Activated CD4-positive, alpha-beta memory T cell treated with anti-CD3 and anti-CD28 coated beads for 36 hours (primary cell): ENCODE measurements at regions of chr4 and their contacts with region 1.

Region 1: GRCh38 chr4:102826890-102827673 is at the start of gene UBE2D3:
- DNase-seq: peak; percentile 97
- H3K4me3 Mint-ChIP-seq: no peak within 1 kb of the TSS
- H3K27ac Mint-ChIP-seq: no peak within 1 kb of the TSS
- H3K4me1 Mint-ChIP-seq: peaks cover 26% of the 10 kb centered on the region
- H3K27me3 Mint-ChIP-seq: no peaks in the 10 kb centered on the region
- total RNA-seq, gene UBE2D3: 415 to 447 TPM

Region 2: GRCh38 chr4:102430461-102430910 is 396.6 kb before region 1 on chr4:
- CTCF ChIA-PET with region 1: interaction called, 8 read pairs
- POLR2A ChIA-PET with region 1: no interaction called
- intact Hi-C with region 1: loop called (anchors 5 kb)
- DNase-seq: no peak
- H3K4me3 Mint-ChIP-seq: peak overlapping the region; percentile 82
- H3K27ac Mint-ChIP-seq: peak overlapping the region; percentile 62
- H3K4me1 Mint-ChIP-seq: peaks cover 8% of the 10 kb centered on the region
- H3K27me3 Mint-ChIP-seq: no peaks in the 10 kb centered on the region

Region 3: DNA sequence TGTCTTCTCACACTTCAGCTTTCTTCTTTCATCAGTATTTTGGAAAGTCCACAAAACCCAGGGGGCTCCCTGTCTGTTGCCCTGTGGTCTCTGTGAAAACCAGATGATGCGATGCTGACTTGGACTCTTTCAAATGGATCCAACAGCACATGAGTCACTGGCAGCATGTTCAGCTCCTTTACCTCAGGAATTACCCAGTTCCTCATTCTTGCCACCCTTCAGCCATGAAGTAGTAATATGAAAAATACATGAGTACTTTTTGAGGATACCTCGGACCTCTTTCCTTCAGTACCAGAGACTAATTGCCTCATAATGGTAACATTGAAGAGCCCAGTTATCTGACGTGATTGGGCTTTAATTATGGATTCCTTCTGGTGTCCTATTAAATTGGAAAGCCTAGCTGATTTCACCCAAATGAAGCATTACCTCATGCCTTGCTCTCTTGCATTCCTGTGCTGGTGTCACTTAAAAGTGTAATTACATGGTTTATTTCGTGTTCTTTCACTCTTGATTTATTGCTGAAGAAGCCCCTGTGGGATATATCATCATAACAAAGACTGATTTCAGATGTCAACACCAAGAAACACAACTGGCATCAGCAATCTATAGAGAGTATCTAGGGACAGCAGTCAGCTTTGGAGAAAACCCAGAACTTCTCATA is 262.6 kb before region 1 on chr4:
- CTCF ChIA-PET with region 1: no interaction called
- POLR2A ChIA-PET with region 1: no interaction called
- intact Hi-C with region 1: no loop called
- DNase-seq: peak; percentile 51
- H3K4me3 Mint-ChIP-seq: no peak overlapping the region
- H3K27ac Mint-ChIP-seq: peak overlapping the region; percentile 40
- H3K4me1 Mint-ChIP-seq: peaks cover 82% of the 10 kb centered on the region
- H3K27me3 Mint-ChIP-seq: no peaks in the 10 kb centered on the region

Region 4: DNA sequence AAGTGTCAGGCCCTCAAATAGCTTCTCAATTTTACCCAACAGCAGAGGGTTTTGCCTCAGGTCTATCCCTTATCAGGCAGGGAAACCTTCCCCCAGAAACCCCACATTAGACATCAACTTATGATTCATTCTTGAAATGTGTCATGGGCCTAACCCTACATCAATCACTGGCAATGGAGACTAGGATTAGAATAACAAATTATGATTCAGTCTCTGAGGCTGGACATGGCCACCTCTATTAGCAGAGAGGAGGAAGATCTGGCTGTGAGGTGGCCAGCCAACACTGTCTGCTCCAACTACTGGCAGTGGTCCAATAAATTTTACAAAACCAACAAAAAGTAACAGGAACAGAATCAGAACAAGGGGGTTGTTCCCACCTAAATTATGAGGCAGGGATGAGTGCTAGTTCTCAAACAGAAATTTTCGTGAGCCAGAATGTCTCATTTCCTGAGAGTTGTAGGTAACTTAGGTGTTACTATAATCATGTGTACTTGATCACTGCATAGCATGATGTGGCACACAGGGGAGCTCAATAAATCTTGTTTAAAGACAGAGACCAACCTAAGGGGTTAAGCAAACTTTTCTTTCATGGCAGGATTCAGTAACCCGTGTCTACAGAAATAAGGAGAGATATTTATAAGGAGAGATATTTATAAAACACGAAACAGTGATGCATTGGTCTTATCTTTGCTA is 199.1 kb before region 1 on chr4:
- CTCF ChIA-PET with region 1: interaction called, 3 read pairs
- POLR2A ChIA-PET with region 1: interaction called, 3 read pairs
- intact Hi-C with region 1: loop called (anchors 1 kb)
- DNase-seq: peak; percentile 37
- H3K4me3 Mint-ChIP-seq: no peak overlapping the region
- H3K27ac Mint-ChIP-seq: peak overlapping the region; percentile 69
- H3K4me1 Mint-ChIP-seq: peaks cover 67% of the 10 kb centered on the region
- H3K27me3 Mint-ChIP-seq: no peaks in the 10 kb centered on the region

Region 5: GRCh38 chr4:102815981-102816380 is 11.1 kb before region 1 on chr4:
- CTCF ChIA-PET with region 1: interaction called, 10 read pairs
- POLR2A ChIA-PET with region 1: interaction called, 105 read pairs
- intact Hi-C with region 1: loop called (anchors 1 kb)
- DNase-seq: no peak
- H3K4me3 Mint-ChIP-seq: no peak overlapping the region
- H3K27ac Mint-ChIP-seq: peak overlapping the region; percentile 82
- H3K4me1 Mint-ChIP-seq: peaks cover 86% of the 10 kb centered on the region
- H3K27me3 Mint-ChIP-seq: no peaks in the 10 kb centered on the region

Region 6: DNA sequence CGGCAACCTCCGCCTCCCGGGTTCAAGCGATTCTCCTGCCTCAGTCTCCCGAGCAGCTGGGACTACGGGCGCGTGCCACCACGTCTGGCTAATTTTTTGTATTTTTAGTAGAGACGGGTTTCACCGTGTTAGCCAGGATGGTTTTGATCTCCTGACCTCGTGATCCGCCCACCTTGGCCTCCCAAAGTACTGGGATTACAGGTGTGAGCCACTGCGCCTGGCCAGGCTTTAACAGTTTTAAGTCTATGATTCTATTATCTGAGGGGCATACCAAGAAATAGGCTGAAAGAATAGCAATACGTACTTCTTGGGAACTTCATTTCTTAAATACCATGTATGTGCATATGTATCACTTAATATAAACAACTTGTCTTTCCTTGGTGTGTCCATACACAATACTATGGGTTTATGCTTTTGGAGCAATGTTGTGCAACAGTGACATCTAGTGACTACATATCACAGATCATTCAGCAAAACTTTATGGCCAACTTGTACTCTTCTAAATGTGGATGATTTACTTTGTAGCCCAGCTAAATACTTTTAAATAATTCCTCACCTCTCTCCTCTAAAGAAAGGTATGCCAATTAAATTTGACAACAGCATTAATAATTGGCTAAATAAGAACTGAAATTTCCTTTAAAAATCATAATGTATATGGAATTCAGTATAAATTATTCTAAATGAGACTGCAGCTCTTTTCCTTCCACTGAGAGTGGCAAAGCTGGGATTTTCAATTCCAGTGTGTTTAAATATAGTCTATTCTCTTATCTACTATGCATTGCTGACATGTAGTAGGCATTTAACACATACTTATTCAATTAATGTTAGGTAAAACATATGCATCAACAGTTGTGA is 182.0 kb after region 1 on chr4:
- CTCF ChIA-PET with region 1: interaction called, 9 read pairs
- POLR2A ChIA-PET with region 1: no interaction called
- intact Hi-C with region 1: loop called (anchors 2 kb)
- DNase-seq: no peak
- H3K4me3 Mint-ChIP-seq: no peak overlapping the region
- H3K27ac Mint-ChIP-seq: no peak overlapping the region
- H3K4me1 Mint-ChIP-seq: no peaks in the 10 kb centered on the region
- H3K27me3 Mint-ChIP-seq: no peaks in the 10 kb centered on the region

Region 7: DNA sequence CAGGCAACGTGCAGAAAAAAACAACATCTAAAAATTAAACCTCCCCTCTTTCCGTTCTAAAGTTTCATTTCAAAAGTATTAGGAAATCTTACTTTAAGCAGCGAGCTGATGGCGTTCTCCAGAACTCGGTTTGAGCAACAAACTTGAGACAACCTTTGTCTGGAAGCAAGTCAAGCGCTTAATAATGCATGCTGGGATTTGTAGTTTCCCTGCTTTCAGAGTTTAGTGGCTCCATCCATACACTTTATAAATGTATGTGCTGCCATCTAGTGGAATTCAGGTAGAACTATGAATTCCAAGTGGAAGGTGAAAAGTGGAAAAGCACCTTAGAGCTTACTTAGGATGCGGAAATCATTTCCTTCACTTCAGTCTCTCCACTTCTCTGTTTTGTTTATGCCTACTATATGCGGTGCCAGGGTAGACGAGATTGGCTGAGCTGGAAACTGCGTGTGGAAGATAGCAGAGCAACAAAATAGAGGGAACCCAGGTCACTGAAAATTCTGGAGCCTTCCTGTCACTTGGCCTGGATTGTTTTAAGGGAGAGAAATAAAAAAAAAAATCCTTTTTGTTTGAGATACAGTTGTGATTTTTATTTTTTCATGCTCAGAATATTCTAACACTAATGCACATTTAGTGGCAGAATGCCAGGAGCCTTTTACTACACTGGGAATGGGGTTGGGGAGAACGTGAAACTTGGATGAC is 272.8 kb after region 1 on chr4 and contains the start of gene BDH2:
- CTCF ChIA-PET with region 1: interaction called, 3 read pairs
- POLR2A ChIA-PET with region 1: interaction called, 3 read pairs
- intact Hi-C with region 1: loop called (anchors 1 kb)
- DNase-seq: peak; percentile 47
- H3K4me3 Mint-ChIP-seq: peak within 1 kb of the TSS; percentile 76
- H3K27ac Mint-ChIP-seq: peak within 1 kb of the TSS; percentile 78
- H3K4me1 Mint-ChIP-seq: peaks cover 17% of the 10 kb centered on the region
- H3K27me3 Mint-ChIP-seq: no peaks in the 10 kb centered on the region
- total RNA-seq, gene BDH2: 14.4 to 15.4 TPM